Psoas muscle (tissue), 8 donors: ENCODE measurements at regions of chr18 and their contacts with region 1.

Region 1: GRCh38 chr18:33231474-33232317 is 208.8 kb downstream of the CCDC178 start:
- DNase-seq: peak; percentile 20 to 50
- ATAC-seq: peak in 3 of 4 donors; percentile 58 to 71 (median 64)
- H3K4me3 ChIP-seq: no peak overlapping the region
- H3K27ac ChIP-seq: no peak overlapping the region
- H3K4me1 ChIP-seq: no peaks in the 10 kb centered on the region
- H3K27me3 ChIP-seq: no peaks in the 10 kb centered on the region
- CTCF ChIP-seq: peak; percentile 80

Region 2: GRCh38 chr18:33761363-33761762 is 529.7 kb after region 1 on chr18:
- intact Hi-C with region 1: loop called in 1 of 2 experiments (anchors 5 kb)
- DNase-seq: no peak
- ATAC-seq: no peak
- H3K4me3 ChIP-seq: no peak overlapping the region
- H3K27ac ChIP-seq: no peak overlapping the region
- H3K4me1 ChIP-seq: no peaks in the 10 kb centered on the region
- H3K27me3 ChIP-seq: no peaks in the 10 kb centered on the region
- CTCF ChIP-seq: peak; percentile 31